Mammary epithelial cell (primary cell): ENCODE measurements at regions of chr18 and their contacts with region 1.

Region 1: DNA sequence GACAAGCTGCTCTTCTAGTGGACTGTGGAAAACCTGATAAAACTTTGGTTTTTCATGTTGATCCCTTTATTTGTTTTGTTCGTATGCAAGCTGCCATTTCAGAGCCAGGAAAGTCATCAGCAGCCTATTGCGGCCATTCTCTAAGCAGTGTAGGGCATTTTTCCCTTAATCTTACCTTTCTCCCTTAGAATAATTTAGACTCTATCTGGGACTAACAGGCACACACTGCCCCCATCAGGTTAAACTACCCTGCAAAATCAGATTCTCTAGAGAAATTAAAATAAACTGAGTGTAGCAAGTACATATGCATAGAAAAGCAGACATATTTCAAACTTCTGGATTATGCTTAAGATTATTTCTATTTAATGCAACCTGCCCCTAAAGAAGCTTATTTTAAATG is 347.5 kb downstream of the METTL4 start:
- DNase-seq: peak; percentile 50
- H3K4me3 ChIP-seq: peak overlapping the region; percentile 35 to 50 (median 48)
- H3K27ac ChIP-seq: no peak overlapping the region
- H3K4me1 ChIP-seq: peaks cover 5% of the 10 kb centered on the region
- H3K27me3 ChIP-seq: no peaks in the 10 kb centered on the region
- CTCF ChIP-seq: peak; percentile 67 to 71

Region 2: DNA sequence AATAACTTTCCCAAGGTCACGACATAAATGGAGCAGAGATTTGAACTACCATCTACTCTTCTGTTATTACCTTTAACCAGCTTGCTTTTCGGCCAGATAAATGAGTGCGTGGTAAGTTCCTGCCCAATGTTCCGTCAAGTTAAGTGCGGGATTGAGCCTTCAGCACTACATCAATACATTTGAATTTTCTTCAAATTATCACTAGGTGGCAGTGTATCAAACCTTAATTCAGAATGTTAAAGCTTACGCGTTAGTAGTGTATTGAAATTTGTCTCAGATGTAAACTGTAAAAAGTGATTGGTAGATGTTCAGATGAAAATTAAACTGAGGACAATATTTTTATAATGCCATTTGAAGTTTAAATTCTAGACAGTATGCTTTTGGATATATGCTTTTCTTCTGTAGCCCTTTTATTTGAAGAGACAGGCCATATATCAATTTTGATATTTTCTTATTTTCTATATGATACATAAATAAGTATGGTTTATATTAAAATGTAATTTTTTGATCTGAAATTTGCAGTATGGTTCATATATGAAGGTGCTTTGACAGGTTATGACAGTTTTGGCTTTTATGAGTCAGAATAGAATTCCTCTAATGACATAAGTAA is 637.9 kb before region 1 on chr18:
- CTCF ChIA-PET with region 1: no interaction called
- dilution Hi-C with region 1: no loop called
- in situ Hi-C with region 1: loop called in 1 of 2 experiments (anchors 25 kb)
- intact Hi-C with region 1: no loop called
- DNase-seq: peak; percentile 13
- H3K4me3 ChIP-seq: no peak overlapping the region
- H3K27ac ChIP-seq: no peak overlapping the region
- H3K4me1 ChIP-seq: no peaks in the 10 kb centered on the region
- H3K27me3 ChIP-seq: no peaks in the 10 kb centered on the region
- CTCF ChIP-seq: peak; percentile 25 to 58

Region 3: DNA sequence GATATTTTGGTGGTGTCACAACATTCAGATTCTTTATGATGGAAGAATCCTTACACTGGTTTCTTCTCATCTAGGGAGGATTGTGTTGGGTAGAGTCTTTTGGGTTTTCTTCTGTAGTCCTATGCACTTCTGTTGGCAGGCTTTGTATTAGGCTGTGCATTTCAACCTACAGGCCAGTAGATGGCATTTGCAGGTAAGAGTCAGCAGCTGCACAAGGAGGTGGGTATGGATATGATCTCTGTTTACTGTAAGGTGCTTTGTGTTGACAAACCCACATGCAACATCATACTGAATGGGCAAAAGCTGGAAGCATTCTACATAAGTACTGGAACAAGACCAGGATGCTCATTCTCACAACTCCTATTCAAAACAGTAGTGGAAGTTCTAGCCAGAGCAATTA is 309.4 kb before region 1 on chr18:
- CTCF ChIA-PET with region 1: no interaction called
- dilution Hi-C with region 1: no loop called
- in situ Hi-C with region 1: no loop called
- intact Hi-C with region 1: loop called (anchors 1 kb)
- DNase-seq: peak; percentile 11
- H3K4me3 ChIP-seq: no peak overlapping the region
- H3K27ac ChIP-seq: no peak overlapping the region
- H3K4me1 ChIP-seq: no peaks in the 10 kb centered on the region
- H3K27me3 ChIP-seq: no peaks in the 10 kb centered on the region
- CTCF ChIP-seq: peak; percentile 64 to 76

Region 4: DNA sequence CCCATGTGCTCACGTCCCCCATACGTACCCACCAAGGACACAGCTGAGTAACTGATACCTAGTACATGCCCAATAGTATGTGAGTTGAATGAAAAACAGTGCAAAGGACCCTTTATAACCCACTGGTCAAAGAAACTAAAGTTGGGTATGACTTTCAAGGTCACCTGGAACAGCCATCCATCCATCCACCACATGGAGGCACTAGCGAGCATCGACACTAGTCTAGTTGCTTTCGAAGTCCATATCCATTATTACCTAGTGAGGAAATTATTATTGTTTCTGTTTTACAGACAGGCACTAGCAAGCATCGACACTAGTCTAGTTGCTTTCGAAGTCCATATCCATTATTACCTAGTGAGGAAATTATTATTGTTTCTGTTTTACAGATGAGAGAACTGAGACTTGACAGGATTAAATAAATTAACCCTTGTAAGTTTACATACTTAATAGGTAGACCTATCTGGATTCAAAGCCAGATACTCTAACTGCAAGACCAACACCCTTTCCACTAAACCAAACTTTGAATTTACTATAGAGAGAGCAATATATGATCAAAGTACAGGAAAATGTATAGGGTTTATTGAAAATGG is 113.8 kb after region 1 on chr18:
- CTCF ChIA-PET with region 1: no interaction called
- dilution Hi-C with region 1: no loop called
- in situ Hi-C with region 1: no loop called
- intact Hi-C with region 1: loop called (anchors 5 kb)
- DNase-seq: peak; percentile 15
- H3K4me3 ChIP-seq: no peak overlapping the region
- H3K27ac ChIP-seq: no peak overlapping the region
- H3K4me1 ChIP-seq: no peaks in the 10 kb centered on the region
- H3K27me3 ChIP-seq: no peaks in the 10 kb centered on the region
- CTCF ChIP-seq: peak; percentile 63 to 67

Region 5: GRCh38 chr18:2547477-2548087 is 323.7 kb after region 1 on chr18:
- CTCF ChIA-PET with region 1: no interaction called
- dilution Hi-C with region 1: no loop called
- in situ Hi-C with region 1: no loop called
- intact Hi-C with region 1: loop called (anchors 2 kb)
- DNase-seq: peak; percentile 19
- H3K4me3 ChIP-seq: no peak overlapping the region
- H3K27ac ChIP-seq: no peak overlapping the region
- H3K4me1 ChIP-seq: no peaks in the 10 kb centered on the region
- H3K27me3 ChIP-seq: no peaks in the 10 kb centered on the region
- CTCF ChIP-seq: peak; percentile 39 to 42